Psoas muscle (tissue), 8 donors: ENCODE measurements at regions of chr19 and their contacts with region 1.

Region 1: DNA sequence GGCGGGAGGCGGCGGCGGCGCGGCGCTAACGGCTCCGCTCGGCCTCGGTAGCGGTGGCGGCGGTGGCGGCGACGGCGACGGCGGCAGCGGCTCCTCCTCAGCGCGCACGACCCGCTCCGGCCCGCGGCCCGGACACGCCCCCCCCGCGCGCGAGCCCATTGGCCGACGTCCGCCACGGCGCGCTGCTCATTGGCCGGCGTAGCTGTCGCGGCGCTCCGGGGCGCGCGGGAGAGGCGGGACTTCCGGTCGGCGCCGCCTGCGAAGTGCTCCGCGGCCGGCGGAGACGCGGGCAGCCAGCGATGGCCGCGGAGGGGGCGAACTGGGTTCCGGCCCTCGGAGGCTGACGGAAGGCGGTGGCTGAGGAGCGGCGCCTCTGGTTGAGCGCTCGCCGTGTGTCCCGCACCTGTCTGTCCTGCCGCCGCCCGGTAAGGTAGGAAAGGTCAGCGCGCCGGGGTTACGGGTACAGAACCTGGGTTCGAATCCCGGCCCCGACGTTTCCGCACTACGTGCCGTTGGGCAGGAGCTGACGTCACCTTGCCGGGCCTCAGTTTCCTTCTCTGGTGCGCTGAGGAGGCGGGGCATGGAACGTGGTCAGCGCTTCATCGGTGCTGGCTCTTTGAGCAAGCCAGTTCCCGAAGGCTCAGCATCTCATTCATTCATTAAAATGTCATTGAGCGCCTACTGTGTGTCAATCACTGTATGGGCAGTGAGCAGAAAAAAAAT is at the start of gene ELAVL1:
- DNase-seq: peak; percentile 92 to 95
- ATAC-seq: peak; percentile 90 to 98 (median 96)
- H3K4me3 ChIP-seq: peak within 1 kb of the TSS; percentile 98
- H3K27ac ChIP-seq: peak within 1 kb of the TSS; percentile 90
- H3K4me1 ChIP-seq: peaks cover 43% of the 10 kb centered on the region
- H3K27me3 ChIP-seq: no peaks in the 10 kb centered on the region
- CTCF ChIP-seq: no peak
- total RNA-seq, gene ELAVL1: 44.5 to 57.9 (median 48.0) TPM

Region 2: DNA sequence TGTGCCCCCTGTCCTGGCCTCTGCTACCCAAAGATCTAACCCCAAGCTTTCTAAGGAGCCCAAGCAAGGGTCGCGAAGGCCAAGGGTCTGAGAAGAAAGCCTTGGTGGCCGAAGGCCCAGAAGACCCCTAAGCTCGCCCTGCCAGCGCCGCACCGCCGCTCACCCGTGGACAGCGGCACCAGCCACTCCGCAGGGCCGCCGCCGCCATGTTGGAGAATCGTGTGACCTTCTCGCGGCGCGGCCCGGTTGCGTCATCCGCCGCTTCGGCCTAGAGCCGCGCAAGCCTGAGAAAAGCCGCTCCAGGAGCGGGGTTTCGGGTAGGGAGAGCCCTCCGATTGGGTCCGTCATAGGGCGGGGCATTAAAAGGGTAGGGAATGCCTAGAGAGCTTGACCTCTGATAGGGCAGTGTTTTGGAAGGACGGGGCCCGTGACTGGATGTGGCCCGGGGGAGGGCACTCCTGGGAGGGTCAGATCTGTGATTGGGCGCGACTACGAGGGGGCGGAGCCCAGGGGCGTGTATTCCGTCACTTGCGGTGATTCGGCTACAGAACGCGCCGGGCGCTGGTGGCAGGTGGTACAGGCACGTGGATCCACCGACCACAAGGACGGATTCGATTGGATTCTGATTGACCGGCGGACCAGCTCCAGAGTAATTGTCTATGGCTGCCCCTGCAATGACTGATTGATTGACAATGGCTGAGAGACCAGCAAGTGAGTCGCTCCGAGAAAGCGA is 62.1 kb before region 1 on chr19 and contains the start of gene TIMM44:
- intact Hi-C with region 1: loop called in 1 of 2 experiments (anchors 1 kb)
- DNase-seq: peak; percentile 99 to 100
- ATAC-seq: peak; percentile 97 to 98 (median 98)
- H3K4me3 ChIP-seq: peak within 1 kb of the TSS; percentile 99
- H3K27ac ChIP-seq: peak within 1 kb of the TSS; percentile 99
- H3K4me1 ChIP-seq: peaks cover 17% of the 10 kb centered on the region
- H3K27me3 ChIP-seq: no peaks in the 10 kb centered on the region
- CTCF ChIP-seq: no peak
- total RNA-seq, gene TIMM44: 67.0 to 95.8 (median 80.0) TPM

Region 3: DNA sequence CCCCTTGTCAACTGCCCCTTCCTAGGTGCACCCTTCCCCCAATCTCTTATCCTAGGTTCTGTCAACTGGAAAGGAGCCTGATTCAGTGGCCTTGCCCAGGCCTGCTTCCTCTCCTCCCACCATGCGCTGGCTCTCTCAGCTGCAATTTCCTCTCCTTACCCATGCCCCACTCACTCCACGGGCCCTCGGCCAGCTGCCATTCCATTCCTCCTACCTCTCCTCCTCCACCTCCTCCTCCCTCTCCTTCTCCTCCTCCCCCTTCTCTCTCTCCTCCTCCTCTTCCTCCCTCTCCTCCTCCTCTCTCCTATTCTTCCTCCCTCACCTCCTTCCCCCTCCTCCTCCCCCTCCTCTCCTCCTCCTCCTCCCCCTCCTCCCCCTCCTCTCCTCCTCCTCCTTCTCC is 52.6 kb before region 1 on chr19:
- intact Hi-C with region 1: loop called in 1 of 2 experiments (anchors 5 kb)
- DNase-seq: no peak
- ATAC-seq: no peak
- H3K4me3 ChIP-seq: no peak overlapping the region
- H3K27ac ChIP-seq: no peak overlapping the region
- H3K4me1 ChIP-seq: peaks cover 19% of the 10 kb centered on the region
- H3K27me3 ChIP-seq: no peaks in the 10 kb centered on the region
- CTCF ChIP-seq: no peak

Region 4: GRCh38 chr19:7970716-7971448 is 34.8 kb before region 1 on chr19:
- intact Hi-C with region 1: loop called (anchors 2 kb)
- DNase-seq: peak in 1 of 2 donors; percentile 65
- ATAC-seq: peak in 2 of 4 donors; percentile 39 to 40
- H3K4me3 ChIP-seq: no peak overlapping the region
- H3K27ac ChIP-seq: no peak overlapping the region
- H3K4me1 ChIP-seq: peaks cover 16% of the 10 kb centered on the region
- H3K27me3 ChIP-seq: no peaks in the 10 kb centered on the region
- CTCF ChIP-seq: peak; percentile 60

Region 5: DNA sequence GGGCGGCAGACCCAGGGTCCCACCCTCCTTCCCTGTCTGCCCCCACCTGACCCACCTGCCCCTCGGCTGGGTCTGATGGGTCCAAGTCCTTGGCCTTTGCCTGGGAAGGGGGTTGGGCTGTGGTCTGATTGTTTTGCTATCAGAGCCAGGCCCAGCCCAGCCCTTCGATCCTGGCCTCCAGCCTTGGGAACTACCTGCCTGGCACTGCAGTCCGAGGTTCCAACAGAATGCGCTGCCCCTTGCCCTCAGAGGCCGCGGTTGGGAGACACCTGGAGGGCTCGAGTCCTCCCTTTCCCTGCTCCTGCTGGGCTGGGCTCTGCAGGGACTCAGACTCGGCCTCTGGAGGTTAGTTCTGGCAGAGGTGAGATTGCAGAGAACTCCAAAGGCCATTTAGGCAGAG is 48.5 kb after region 1 on chr19:
- intact Hi-C with region 1: no loop called
- DNase-seq: no peak
- ATAC-seq: no peak
- H3K4me3 ChIP-seq: no peak overlapping the region
- H3K27ac ChIP-seq: no peak overlapping the region
- H3K4me1 ChIP-seq: no peaks in the 10 kb centered on the region
- H3K27me3 ChIP-seq: peaks cover 0 to 8% (median 6%) of the 10 kb centered on the region in 3 donors
- CTCF ChIP-seq: no peak

Region 6: GRCh38 chr19:8832132-8833021 is 826.7 kb after region 1 on chr19 and contains the starts of genes MBD3L1 and ZNF558:
- intact Hi-C with region 1: loop called in 1 of 2 experiments (anchors 5 kb)
- DNase-seq: peak; percentile 99 to 100
- ATAC-seq: peak; percentile 94 to 96 (median 94)
- H3K4me3 ChIP-seq: peak within 1 kb of the TSS; percentile 81
- H3K27ac ChIP-seq: peak within 1 kb of the TSS; percentile 96
- H3K4me1 ChIP-seq: peaks cover 6% of the 10 kb centered on the region
- H3K27me3 ChIP-seq: peaks cover 0 to 6% (median 0%) of the 10 kb centered on the region in 3 donors
- CTCF ChIP-seq: peak; percentile 32
- total RNA-seq, gene MBD3L1: not detected
- total RNA-seq, gene ZNF558: 12.9 to 15.7 (median 14.3) TPM